ENCODE measurements at regions of chr13 and their contacts with region 1.

Region 1: DNA sequence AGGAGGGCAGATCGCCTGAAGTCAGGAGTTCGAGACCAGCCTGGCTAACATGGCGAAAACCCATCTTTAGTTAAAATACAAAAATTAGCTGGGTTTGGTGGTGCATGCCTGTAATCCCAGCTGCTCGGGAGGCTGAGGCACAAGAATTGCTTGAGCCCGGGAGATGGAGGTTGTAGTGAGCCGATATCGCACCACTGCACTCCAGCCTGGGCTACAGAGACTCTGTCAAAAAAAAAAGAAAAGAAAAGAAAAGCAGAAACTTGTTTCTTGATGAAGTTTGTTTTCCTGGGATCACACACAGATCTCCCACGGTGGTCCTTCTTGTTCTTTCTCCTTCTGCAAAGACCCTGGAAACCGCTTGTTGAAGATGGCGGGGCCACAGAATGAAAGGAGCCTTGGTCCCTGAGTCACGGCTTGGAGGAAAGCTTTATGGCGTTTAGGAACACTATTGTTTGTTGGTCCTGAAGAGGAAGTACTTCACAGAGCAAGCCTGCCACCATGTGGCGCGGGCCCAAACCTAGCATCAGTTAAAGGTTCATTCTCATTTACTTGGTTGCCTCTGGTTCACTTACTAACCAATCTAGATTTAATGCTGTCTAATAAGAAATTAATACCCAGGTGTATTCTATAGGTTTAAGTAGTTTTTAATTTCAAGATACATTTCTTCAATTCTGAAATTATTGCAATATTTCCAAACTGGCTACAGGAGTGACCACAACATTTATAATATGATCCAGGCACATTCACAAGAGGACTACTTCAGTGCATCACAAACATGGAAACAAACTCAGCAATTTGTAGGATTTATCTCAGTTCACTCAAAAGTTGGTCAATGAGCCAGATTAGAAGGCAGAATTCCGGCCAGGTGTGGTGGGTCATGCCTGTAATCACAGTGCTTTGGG is 21.3 kb upstream of the ARL11 start:
- DNase-seq: peak; percentile 88 to 90
- H3K4me3 ChIP-seq: peak overlapping the region; percentile 40 to 43
- H3K27ac ChIP-seq: peak overlapping the region in 1 of 2 donors; percentile 22
- H3K4me1 ChIP-seq: peaks cover 0 to 4% (median 0%) of the 10 kb centered on the region in 4 donors
- H3K27me3 ChIP-seq: no peaks in the 10 kb centered on the region
- CTCF ChIP-seq: peak; percentile 78 to 79

Region 2: GRCh38 chr13:49171358-49171757 is 435.6 kb before region 1 on chr13:
- intact Hi-C with region 1: no loop called
- DNase-seq: no peak
- H3K4me3 ChIP-seq: no peak overlapping the region
- H3K27ac ChIP-seq: no peak overlapping the region
- H3K4me1 ChIP-seq: no peaks in the 10 kb centered on the region
- H3K27me3 ChIP-seq: no peaks in the 10 kb centered on the region
- CTCF ChIP-seq: no peak

Region 3: GRCh38 chr13:49550942-49551644 is 55.9 kb before region 1 on chr13:
- intact Hi-C with region 1: loop called (anchors 10 kb)
- DNase-seq: no peak
- H3K4me3 ChIP-seq: no peak overlapping the region
- H3K27ac ChIP-seq: no peak overlapping the region
- H3K4me1 ChIP-seq: no peaks in the 10 kb centered on the region
- H3K27me3 ChIP-seq: no peaks in the 10 kb centered on the region
- CTCF ChIP-seq: no peak

Measured in tibial artery (tissue), 4 donors.